ENCODE measurements at regions of chr1 and their contacts with region 1.

Region 1: DNA sequence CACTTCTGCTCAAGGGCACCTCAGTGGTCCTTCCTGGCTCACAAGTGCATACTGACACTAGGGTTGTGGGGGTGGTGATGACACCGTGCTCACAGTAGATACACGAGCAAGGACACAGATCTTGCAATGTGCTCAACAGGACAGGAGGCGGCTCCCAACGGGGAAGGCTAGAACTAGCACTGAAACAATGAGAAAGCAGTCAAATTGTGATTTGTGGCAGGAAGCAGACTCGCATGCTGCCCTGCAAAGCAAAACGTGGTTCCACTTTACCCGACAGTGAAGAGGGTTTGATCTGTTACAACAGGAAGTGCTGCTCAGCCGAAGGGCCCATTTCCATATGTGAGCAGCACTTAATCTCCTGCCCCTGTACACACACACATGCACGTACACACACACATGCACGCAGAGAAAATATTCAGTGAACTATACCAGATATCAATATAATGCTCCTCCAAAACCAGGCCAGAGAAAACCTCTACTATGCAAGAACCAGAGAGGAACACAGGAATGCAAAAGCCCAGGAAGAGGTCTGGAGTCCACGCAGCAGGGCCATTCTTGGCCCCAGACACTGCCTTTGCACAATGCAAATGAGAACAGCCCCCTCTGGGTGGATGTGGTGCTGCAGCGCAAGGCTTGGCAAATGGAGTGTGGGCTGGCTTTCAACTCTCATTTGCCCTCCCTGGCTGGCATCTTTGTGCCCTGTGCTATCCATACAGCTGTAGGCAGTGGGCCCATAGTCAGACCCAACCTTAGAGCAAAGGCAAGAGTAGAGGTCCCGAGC is 47.1 kb downstream of the KANK4 start:
- DNase-seq: peak; percentile 19 to 85 (median 73)
- ATAC-seq: peak; percentile 82
- H3K4me3 ChIP-seq: peak overlapping the region; percentile 25
- H3K4me3 Mint-ChIP-seq: peak overlapping the region; percentile 37 to 80 (median 70)
- H3K27ac ChIP-seq: peak overlapping the region; percentile 27
- H3K27ac Mint-ChIP-seq: peak overlapping the region; percentile 85 to 97 (median 95)
- H3K4me1 ChIP-seq: peaks cover 6 to 19% of the 10 kb centered on the region in 2 donors
- H3K4me1 Mint-ChIP-seq: peaks cover 25 to 42% (median 34%) of the 10 kb centered on the region in 7 donors
- H3K27me3 ChIP-seq: no peaks in the 10 kb centered on the region
- H3K27me3 Mint-ChIP-seq: no peaks in the 10 kb centered on the region

Region 2: DNA sequence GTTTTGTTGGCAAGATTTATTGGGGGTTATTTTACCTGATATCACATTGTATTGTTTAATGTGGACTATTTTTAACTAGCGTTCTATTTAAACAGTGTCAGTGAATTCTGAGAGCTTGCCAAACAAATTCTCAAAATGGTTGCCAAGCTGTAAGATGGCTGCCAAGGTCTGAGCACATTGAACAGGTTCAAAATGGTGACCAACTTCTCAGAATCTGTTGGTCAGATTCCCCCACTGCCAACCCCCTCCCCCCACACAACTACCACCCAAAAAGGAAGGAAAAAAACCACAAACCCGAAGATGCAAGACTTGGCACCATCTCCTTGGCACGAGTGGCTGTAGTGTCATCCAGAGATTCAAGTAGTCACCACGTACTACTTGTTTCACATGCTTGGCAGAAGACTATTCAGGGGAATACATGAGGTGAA is 1030.7 kb before region 1 on chr1:
- CTCF ChIA-PET with region 1: no interaction called
- POLR2A ChIA-PET with region 1: no interaction called
- intact Hi-C with region 1: no loop called
- DNase-seq: no peak
- ATAC-seq: no peak
- H3K4me3 ChIP-seq: no peak overlapping the region
- H3K4me3 Mint-ChIP-seq: no peak overlapping the region
- H3K27ac ChIP-seq: no peak overlapping the region
- H3K27ac Mint-ChIP-seq: no peak overlapping the region
- H3K4me1 ChIP-seq: no peaks in the 10 kb centered on the region
- H3K4me1 Mint-ChIP-seq: peaks cover 0 to 3% (median 0%) of the 10 kb centered on the region in 7 donors
- H3K27me3 ChIP-seq: no peaks in the 10 kb centered on the region
- H3K27me3 Mint-ChIP-seq: peaks cover 0 to 3% (median 0%) of the 10 kb centered on the region in 5 donors

Region 3: GRCh38 chr1:62175568-62176179 is 96.5 kb before region 1 on chr1:
- CTCF ChIA-PET with region 1: no interaction called
- POLR2A ChIA-PET with region 1: no interaction called
- intact Hi-C with region 1: loop called in 1 of 2 experiments (anchors 1 kb)
- DNase-seq: peak in 7 of 9 donors; percentile 15 to 57 (median 49)
- ATAC-seq: peak; percentile 46
- H3K4me3 ChIP-seq: no peak overlapping the region
- H3K4me3 Mint-ChIP-seq: no peak overlapping the region
- H3K27ac ChIP-seq: no peak overlapping the region
- H3K27ac Mint-ChIP-seq: no peak overlapping the region
- H3K4me1 ChIP-seq: no peaks in the 10 kb centered on the region
- H3K4me1 Mint-ChIP-seq: no peaks in the 10 kb centered on the region
- H3K27me3 ChIP-seq: no peaks in the 10 kb centered on the region
- H3K27me3 Mint-ChIP-seq: peaks cover 0 to 16% (median 5%) of the 10 kb centered on the region in 5 donors

Region 4: DNA sequence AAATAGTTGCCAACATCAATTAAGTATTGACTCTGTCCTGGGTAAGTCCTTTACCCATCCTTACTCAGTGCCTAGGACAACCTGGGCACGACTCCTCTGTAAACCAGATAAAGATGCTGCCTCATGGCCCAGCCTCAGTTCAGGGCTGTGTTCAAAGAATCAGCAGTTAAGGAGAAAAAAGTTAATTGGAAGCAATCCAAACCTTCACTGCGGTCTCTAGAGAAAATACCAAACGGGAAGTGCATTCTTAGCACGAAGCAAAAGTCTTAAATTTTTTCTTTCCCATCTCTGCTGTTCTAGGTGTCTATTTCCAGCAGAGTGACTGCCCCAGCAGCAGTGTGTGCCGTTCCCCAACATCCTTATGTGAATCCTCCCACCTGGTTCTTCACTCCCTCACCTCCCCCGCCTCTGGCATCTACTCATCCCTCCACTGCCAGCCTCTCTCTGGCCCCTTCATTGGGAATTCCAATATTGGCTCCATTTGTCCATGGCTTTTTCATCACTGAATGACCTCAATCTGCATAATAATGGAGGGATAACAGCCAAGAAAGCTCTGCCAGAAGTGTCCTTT is 23.9 kb after region 1 on chr1:
- CTCF ChIA-PET with region 1: no interaction called
- POLR2A ChIA-PET with region 1: interaction called, 3 read pairs
- intact Hi-C with region 1: loop called in 1 of 2 experiments (anchors 1 kb)
- DNase-seq: peak in 7 of 9 donors; percentile 10 to 67 (median 51)
- ATAC-seq: peak; percentile 78
- H3K4me3 ChIP-seq: no peak overlapping the region
- H3K4me3 Mint-ChIP-seq: peak overlapping the region in 9 of 10 donors; percentile 8 to 72 (median 64)
- H3K27ac ChIP-seq: no peak overlapping the region
- H3K27ac Mint-ChIP-seq: peak overlapping the region in 7 of 9 donors; percentile 4 to 79 (median 34)
- H3K4me1 ChIP-seq: peaks cover 0 to 11% of the 10 kb centered on the region in 2 donors
- H3K4me1 Mint-ChIP-seq: peaks cover 9 to 16% (median 13%) of the 10 kb centered on the region in 7 donors
- H3K27me3 ChIP-seq: no peaks in the 10 kb centered on the region
- H3K27me3 Mint-ChIP-seq: no peaks in the 10 kb centered on the region

Region 5: DNA sequence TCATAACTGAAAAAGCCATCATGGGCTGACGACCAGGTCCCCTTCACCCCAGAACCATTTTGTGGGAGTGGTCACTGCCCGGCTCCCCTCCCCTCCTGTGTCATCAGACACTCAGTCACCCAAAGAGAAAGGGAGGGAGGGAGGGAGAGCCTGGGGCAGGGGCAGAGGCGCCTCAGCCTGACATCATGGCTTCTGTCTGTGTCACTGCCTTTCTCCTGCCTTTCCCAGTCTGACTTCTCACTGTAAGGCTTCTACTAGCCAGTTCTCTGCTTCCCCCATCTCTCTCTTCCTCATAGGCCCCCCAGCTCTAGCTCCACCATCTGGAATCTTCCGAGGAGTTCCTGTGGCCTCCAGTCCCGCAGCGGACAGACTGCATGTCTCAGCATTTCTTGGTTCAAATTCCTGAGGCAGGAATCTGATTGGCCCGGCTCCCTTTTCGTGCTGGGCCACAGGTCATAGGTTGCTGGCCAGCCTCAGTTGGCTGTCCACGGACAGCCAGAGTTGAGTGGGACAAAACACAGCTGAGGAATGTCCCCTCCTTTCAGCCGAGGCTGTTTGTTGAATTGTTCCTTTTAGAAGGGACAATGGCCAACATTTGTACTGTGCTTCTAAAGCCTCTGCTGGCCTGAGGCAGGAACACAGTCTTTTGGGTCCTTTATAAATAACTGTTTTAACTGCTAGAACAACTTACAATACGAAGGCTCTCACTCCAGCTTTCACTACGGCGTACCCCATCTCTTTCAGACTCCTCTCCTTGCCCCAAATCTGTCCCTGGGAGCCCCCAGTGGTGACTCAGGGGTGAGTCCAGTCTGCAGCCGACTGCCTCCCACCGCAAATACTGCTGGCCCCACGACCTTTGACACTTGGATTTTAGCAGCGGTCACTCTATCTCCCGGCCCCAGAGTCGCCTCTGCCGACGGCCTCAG is 65.8 kb after region 1 on chr1:
- CTCF ChIA-PET with region 1: no interaction called
- POLR2A ChIA-PET with region 1: interaction called, 4 read pairs
- intact Hi-C with region 1: loop called in 1 of 2 experiments (anchors 10 kb)
- DNase-seq: no peak
- ATAC-seq: no peak
- H3K4me3 ChIP-seq: no peak overlapping the region
- H3K4me3 Mint-ChIP-seq: no peak overlapping the region
- H3K27ac ChIP-seq: no peak overlapping the region
- H3K27ac Mint-ChIP-seq: no peak overlapping the region
- H3K4me1 ChIP-seq: no peaks in the 10 kb centered on the region
- H3K4me1 Mint-ChIP-seq: peaks cover 0 to 2% (median 0%) of the 10 kb centered on the region in 7 donors
- H3K27me3 ChIP-seq: no peaks in the 10 kb centered on the region
- H3K27me3 Mint-ChIP-seq: peaks cover 0 to 5% (median 0%) of the 10 kb centered on the region in 5 donors

Region 6: GRCh38 chr1:62407405-62408009 is 135.4 kb after region 1 on chr1:
- CTCF ChIA-PET with region 1: interaction called, 3 read pairs
- POLR2A ChIA-PET with region 1: no interaction called
- intact Hi-C with region 1: loop called in 1 of 2 experiments (anchors 1 kb)
- DNase-seq: peak in 6 of 9 donors; percentile 30 to 64 (median 50)
- ATAC-seq: peak; percentile 70
- H3K4me3 ChIP-seq: no peak overlapping the region
- H3K4me3 Mint-ChIP-seq: no peak overlapping the region
- H3K27ac ChIP-seq: no peak overlapping the region
- H3K27ac Mint-ChIP-seq: peak overlapping the region in 1 of 9 donors; percentile 1
- H3K4me1 ChIP-seq: no peaks in the 10 kb centered on the region
- H3K4me1 Mint-ChIP-seq: no peaks in the 10 kb centered on the region
- H3K27me3 ChIP-seq: no peaks in the 10 kb centered on the region
- H3K27me3 Mint-ChIP-seq: peaks cover 0 to 6% (median 0%) of the 10 kb centered on the region in 5 donors